MCF 10A (cell line): ENCODE measurements at regions of chr5 and their contacts with region 1.

Region 1: GRCh38 chr5:142145106-142145900 is 36.7 kb downstream of the NDFIP1 start:
- DNase-seq: peak; percentile 85
- H3K4me3 Mint-ChIP-seq: no peak overlapping the region
- H3K27ac Mint-ChIP-seq: no peak overlapping the region
- H3K4me1 Mint-ChIP-seq: no peaks in the 10 kb centered on the region
- H3K27me3 Mint-ChIP-seq: no peaks in the 10 kb centered on the region
- CTCF ChIP-seq: peak; percentile 78

Region 2: DNA sequence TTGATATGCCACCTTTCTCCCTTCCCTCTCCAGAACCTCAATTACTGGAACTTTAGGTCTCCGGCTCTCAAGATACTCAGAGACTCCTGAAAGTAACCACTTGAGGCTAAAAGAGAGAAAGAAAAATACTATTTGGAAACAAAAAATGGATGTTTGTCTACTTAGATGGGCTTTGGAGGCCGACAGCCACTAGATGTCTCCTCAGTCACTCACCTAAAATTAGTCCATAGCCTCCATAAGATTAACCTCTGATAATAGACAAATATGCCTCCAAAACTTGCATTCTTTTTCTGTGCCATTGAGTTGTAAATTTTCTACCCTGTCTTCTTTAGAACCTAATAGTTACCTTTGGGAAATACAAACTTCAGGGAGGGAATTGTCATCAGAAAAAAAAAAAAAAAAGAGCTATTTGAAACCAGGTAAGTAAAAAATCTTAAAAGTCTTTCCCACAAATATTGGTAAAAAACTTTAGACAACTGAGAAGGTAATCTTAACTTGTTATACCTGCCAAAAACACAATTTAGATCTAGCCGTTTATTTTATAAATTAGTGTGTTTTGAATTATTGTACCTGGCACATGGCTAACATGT is 255.9 kb before region 1 on chr5:
- CTCF ChIA-PET with region 1: interaction called, 4 read pairs
- POLR2A ChIA-PET with region 1: no interaction called
- intact Hi-C with region 1: loop called (anchors 1 kb)
- DNase-seq: peak; percentile 45
- H3K4me3 Mint-ChIP-seq: no peak overlapping the region
- H3K27ac Mint-ChIP-seq: no peak overlapping the region
- H3K4me1 Mint-ChIP-seq: no peaks in the 10 kb centered on the region
- H3K27me3 Mint-ChIP-seq: peaks cover 48% of the 10 kb centered on the region
- CTCF ChIP-seq: peak; percentile 60

Region 3: GRCh38 chr5:141992349-141992963 is 152.8 kb before region 1 on chr5:
- CTCF ChIA-PET with region 1: interaction called, 172 read pairs
- POLR2A ChIA-PET with region 1: interaction called, 9 read pairs
- intact Hi-C with region 1: loop called (anchors 1 kb)
- DNase-seq: peak; percentile 88
- H3K4me3 Mint-ChIP-seq: no peak overlapping the region
- H3K27ac Mint-ChIP-seq: no peak overlapping the region
- H3K4me1 Mint-ChIP-seq: no peaks in the 10 kb centered on the region
- H3K27me3 Mint-ChIP-seq: no peaks in the 10 kb centered on the region
- CTCF ChIP-seq: peak; percentile 82

Region 4: GRCh38 chr5:142012792-142013388 is 132.4 kb before region 1 on chr5 and contains the start of gene GNPDA1:
- CTCF ChIA-PET with region 1: interaction called, 186 read pairs
- POLR2A ChIA-PET with region 1: interaction called, 59 read pairs
- intact Hi-C with region 1: loop called (anchors 1 kb)
- DNase-seq: peak; percentile 78
- H3K4me3 Mint-ChIP-seq: peak within 1 kb of the TSS; percentile 82
- H3K27ac Mint-ChIP-seq: peak within 1 kb of the TSS; percentile 82
- H3K4me1 Mint-ChIP-seq: peaks cover 35% of the 10 kb centered on the region
- H3K27me3 Mint-ChIP-seq: no peaks in the 10 kb centered on the region
- CTCF ChIP-seq: no peak
- total RNA-seq, gene GNPDA1: 36.1 and 60.9 TPM in 2 replicates

Region 5: GRCh38 chr5:142108432-142109330 is 36.6 kb before region 1 on chr5 and contains the start of gene NDFIP1:
- CTCF ChIA-PET with region 1: interaction called, 27 read pairs
- POLR2A ChIA-PET with region 1: interaction called, 17 read pairs
- intact Hi-C with region 1: loop called (anchors 2 kb)
- DNase-seq: peak; percentile 88
- H3K4me3 Mint-ChIP-seq: peak within 1 kb of the TSS; percentile 94
- H3K27ac Mint-ChIP-seq: peak within 1 kb of the TSS; percentile 86
- H3K4me1 Mint-ChIP-seq: peaks cover 16% of the 10 kb centered on the region
- H3K27me3 Mint-ChIP-seq: no peaks in the 10 kb centered on the region
- CTCF ChIP-seq: no peak
- total RNA-seq, gene NDFIP1: 50.8 and 61.6 TPM in 2 replicates

Region 6: DNA sequence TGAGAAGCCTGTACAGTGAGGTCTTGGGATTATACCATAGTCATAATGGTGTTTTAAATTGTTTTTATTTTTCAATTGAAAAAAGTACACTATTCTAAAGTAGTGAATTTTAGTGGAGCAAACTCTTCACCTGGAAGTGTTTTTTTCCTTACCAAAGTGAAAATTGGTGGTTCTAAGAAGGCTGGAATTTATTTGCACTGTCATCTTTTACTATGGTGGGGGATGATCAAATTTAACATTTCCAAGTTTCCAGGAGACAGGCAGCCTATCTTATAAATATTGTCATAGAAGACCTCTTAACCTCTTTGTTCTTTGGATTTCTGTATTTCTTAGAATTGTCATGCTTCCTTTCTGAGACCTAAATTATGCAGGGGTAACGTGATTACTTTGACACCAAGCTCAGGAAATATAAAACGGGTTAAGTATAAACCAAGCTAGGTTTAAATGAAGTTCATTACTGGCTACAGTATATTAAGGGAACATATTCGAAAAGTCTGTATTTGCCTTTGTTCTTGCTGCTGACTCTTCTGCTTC is 16.6 kb before region 1 on chr5:
- CTCF ChIA-PET with region 1: interaction called, 55 read pairs
- POLR2A ChIA-PET with region 1: interaction called, 3 read pairs
- intact Hi-C with region 1: no loop called
- DNase-seq: no peak
- H3K4me3 Mint-ChIP-seq: no peak overlapping the region
- H3K27ac Mint-ChIP-seq: no peak overlapping the region
- H3K4me1 Mint-ChIP-seq: peaks cover 17% of the 10 kb centered on the region
- H3K27me3 Mint-ChIP-seq: no peaks in the 10 kb centered on the region
- CTCF ChIP-seq: no peak